Heart left ventricle (tissue), 16 donors: ENCODE measurements at regions of chr15 and their contacts with region 1.

Region 1: GRCh38 chr15:89087830-89088604 is at the start of gene ABHD2:
- DNase-seq: peak; percentile 99 to 100 (median 99)
- ATAC-seq: peak; percentile 89 to 96 (median 94)
- H3K4me3 ChIP-seq: peak within 1 kb of the TSS; percentile 75 to 97 (median 94)
- H3K27ac ChIP-seq: peak within 1 kb of the TSS; percentile 91 to 98 (median 96)
- H3K4me1 ChIP-seq: peaks cover 0 to 60% (median 49%) of the 10 kb centered on the region in 12 donors
- H3K27me3 ChIP-seq: no peaks in the 10 kb centered on the region
- CTCF ChIP-seq: no peak
- POLR2A ChIP-seq: peak; percentile 87 to 97
- total RNA-seq, gene ABHD2: 53.4 to 243 (median 128) TPM

Region 2: DNA sequence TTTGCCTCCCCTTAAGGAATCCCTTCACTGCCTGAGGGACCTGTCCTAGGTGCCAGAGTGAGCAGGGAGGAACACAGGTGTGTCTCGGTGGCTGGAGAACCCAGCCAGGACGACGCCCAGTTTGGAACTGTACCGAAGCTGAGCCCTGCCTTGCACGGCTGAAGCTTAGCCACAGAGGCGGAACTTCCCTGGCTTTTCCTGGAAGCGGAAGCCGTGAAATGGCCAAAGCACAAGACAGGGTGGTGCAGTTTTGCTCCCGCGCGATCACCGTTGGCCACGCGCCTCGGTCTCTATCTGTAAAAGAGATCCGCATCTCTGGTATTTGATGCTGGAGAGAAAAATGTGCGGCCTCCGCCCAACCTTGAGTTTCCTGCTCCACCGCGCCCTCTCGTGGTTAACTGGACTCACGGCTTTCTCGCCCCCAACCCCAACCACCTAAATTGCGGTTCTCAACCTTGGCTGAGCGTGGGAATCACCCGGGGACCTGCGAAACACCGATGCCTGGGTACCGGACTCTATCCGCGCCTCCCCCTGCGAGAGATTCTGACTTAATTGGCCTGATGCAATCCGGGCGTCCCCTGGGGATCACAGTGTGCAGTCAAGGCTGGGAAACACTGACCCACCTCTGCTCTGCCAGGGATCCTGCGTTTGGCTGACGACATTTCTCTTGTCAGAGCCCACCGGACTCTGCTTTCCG is 70.5 kb before region 1 on chr15:
- intact Hi-C with region 1: loop called in 1 of 10 experiments (anchors 10 kb)
- DNase-seq: peak; percentile 79 to 87 (median 80)
- ATAC-seq: peak; percentile 57 to 73 (median 71)
- H3K4me3 ChIP-seq: peak overlapping the region in 9 of 12 donors; percentile 37 to 49 (median 42)
- H3K27ac ChIP-seq: peak overlapping the region in 11 of 12 donors; percentile 59 to 89 (median 77)
- H3K4me1 ChIP-seq: peaks cover 5 to 50% (median 29%) of the 10 kb centered on the region in 12 donors
- H3K27me3 ChIP-seq: no peaks in the 10 kb centered on the region
- CTCF ChIP-seq: peak; percentile 72 to 91 (median 80)
- POLR2A ChIP-seq: no peak

Region 3: GRCh38 chr15:89101302-89102191 is 13.5 kb after region 1 on chr15:
- intact Hi-C with region 1: loop called in 1 of 10 experiments (anchors 2 kb)
- DNase-seq: peak; percentile 65 to 89 (median 77)
- ATAC-seq: peak; percentile 69 to 87 (median 86)
- H3K4me3 ChIP-seq: no peak overlapping the region
- H3K27ac ChIP-seq: peak overlapping the region; percentile 7 to 97 (median 88)
- H3K4me1 ChIP-seq: peaks cover 21 to 96% (median 72%) of the 10 kb centered on the region in 12 donors
- H3K27me3 ChIP-seq: no peaks in the 10 kb centered on the region
- CTCF ChIP-seq: no peak
- POLR2A ChIP-seq: peak in 1 of 2 donors; percentile 22

Region 4: GRCh38 chr15:89114997-89115396 is 27.0 kb after region 1 on chr15:
- intact Hi-C with region 1: loop called in 1 of 10 experiments (anchors 2 kb)
- DNase-seq: no peak
- ATAC-seq: no peak
- H3K4me3 ChIP-seq: no peak overlapping the region
- H3K27ac ChIP-seq: peak overlapping the region in 11 of 12 donors; percentile 8 to 97 (median 77)
- H3K4me1 ChIP-seq: peaks cover 5 to 92% (median 68%) of the 10 kb centered on the region in 12 donors
- H3K27me3 ChIP-seq: no peaks in the 10 kb centered on the region
- CTCF ChIP-seq: no peak
- POLR2A ChIP-seq: no peak

Region 5: DNA sequence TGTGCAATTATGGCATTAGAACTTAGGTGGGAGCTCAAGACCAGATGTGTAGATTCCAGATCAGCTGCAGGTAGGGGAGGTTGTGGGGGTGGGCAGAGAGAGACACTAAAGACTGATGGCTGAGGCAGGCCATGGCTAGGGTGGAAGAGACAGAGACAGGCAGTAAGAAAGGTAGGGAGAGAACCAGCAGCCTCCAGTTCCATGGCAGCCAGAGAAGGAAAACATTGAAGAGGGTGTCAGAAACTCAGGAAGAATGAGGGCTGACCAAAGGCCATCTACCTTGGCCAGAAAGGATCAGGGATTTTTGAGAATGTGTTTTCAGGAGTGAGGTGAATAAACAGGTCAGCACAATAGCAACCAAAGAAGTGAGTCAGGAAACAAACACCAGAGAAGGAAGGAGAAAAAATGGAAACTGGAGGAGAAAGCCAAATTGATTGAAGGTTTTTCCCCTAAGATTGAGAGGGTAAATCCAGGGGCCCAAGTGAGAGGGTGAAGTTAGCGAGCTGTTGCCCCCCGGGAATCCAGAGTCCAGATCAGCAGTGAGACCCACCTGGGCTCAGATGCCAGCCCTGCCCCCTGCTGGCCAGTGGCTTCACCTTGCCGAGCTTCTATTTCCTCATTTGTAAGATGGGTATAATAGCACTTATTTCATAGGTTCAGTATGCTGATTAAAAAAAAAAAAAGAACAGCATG is 41.3 kb after region 1 on chr15:
- intact Hi-C with region 1: loop called in 2 of 10 experiments (anchors 5 kb)
- DNase-seq: peak in 1 of 5 donors; percentile 66
- ATAC-seq: no peak
- H3K4me3 ChIP-seq: no peak overlapping the region
- H3K27ac ChIP-seq: peak overlapping the region in 8 of 12 donors; percentile 6 to 88 (median 44)
- H3K4me1 ChIP-seq: peaks cover 0 to 83% (median 55%) of the 10 kb centered on the region in 12 donors
- H3K27me3 ChIP-seq: no peaks in the 10 kb centered on the region
- CTCF ChIP-seq: peak; percentile 25 to 70 (median 59)
- POLR2A ChIP-seq: no peak

Region 6: GRCh38 chr15:89139400-89140166 is 51.6 kb after region 1 on chr15:
- intact Hi-C with region 1: loop called in 4 of 10 experiments (anchors 5 kb)
- DNase-seq: peak in 4 of 5 donors; percentile 41 to 65 (median 54)
- ATAC-seq: peak in 3 of 4 donors; percentile 10 to 14 (median 11)
- H3K4me3 ChIP-seq: no peak overlapping the region
- H3K27ac ChIP-seq: peak overlapping the region; percentile 31 to 90 (median 78)
- H3K4me1 ChIP-seq: peaks cover 22 to 100% (median 87%) of the 10 kb centered on the region in 12 donors
- H3K27me3 ChIP-seq: no peaks in the 10 kb centered on the region
- CTCF ChIP-seq: peak in 6 of 12 donors; percentile 11 to 42 (median 28)
- POLR2A ChIP-seq: no peak

Region 7: DNA sequence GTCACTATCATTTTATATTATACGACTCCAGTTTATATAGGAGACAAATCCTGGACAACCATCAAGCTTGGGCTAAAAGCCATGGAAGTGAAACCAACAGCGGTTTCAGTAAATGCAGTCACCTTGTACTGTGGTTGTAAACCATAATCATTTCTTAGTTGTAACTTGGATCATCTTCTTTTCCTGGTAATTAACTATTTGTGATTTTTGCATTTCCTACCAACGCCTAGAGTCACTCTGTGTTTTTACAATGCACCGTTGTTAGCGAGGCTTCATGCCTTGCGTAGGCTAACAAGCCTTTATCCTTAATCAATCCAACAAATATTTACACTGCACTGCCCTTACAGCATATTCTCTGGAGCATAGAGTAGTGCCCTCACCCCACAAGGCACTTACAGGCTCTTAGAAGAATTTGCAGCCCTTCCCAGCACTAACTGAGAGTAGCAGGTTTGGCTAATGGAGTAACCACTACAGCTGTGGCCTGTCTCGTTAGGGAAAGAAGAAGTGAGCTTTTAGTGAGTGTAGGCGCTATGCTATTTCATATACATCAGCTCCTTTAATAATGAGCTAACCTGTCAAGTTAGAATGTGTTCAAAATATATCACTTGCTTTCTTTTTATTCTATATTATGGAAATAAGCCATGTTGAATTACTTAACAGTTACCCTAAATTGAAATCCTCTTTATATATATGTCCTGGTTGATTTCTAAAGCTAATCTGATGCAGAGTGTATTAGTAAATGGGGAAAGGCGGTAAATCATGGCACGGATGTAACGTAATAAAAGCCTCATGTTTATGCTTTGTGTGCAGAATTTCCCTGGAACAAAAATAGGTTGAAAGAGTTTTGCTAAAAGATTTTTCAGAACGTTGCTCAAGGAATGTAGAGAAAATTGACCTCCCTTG is 63.0 kb after region 1 on chr15:
- intact Hi-C with region 1: no loop called
- DNase-seq: no peak
- ATAC-seq: no peak
- H3K4me3 ChIP-seq: no peak overlapping the region
- H3K27ac ChIP-seq: peak overlapping the region in 4 of 12 donors; percentile 1 to 44 (median 20)
- H3K4me1 ChIP-seq: peaks cover 0 to 54% (median 23%) of the 10 kb centered on the region in 12 donors
- H3K27me3 ChIP-seq: no peaks in the 10 kb centered on the region
- CTCF ChIP-seq: no peak
- POLR2A ChIP-seq: no peak

Region 8: GRCh38 chr15:89171136-89172072 is 83.4 kb after region 1 on chr15:
- intact Hi-C with region 1: loop called in 3 of 10 experiments (anchors 2 to 10 kb)
- DNase-seq: peak in 3 of 5 donors; percentile 41 to 43 (median 42)
- ATAC-seq: no peak
- H3K4me3 ChIP-seq: no peak overlapping the region
- H3K27ac ChIP-seq: no peak overlapping the region
- H3K4me1 ChIP-seq: peaks cover 3 to 54% (median 29%) of the 10 kb centered on the region in 12 donors
- H3K27me3 ChIP-seq: no peaks in the 10 kb centered on the region
- CTCF ChIP-seq: peak; percentile 39 to 72 (median 62)
- POLR2A ChIP-seq: no peak

Region 9: GRCh38 chr15:89430530-89431341 is 342.7 kb after region 1 on chr15:
- intact Hi-C with region 1: no loop called
- DNase-seq: peak; percentile 77 to 91 (median 82)
- ATAC-seq: peak; percentile 90 to 97 (median 92)
- H3K4me3 ChIP-seq: peak overlapping the region; percentile 24 to 62 (median 47)
- H3K27ac ChIP-seq: no peak overlapping the region
- H3K4me1 ChIP-seq: peaks cover 0 to 14% (median 5%) of the 10 kb centered on the region in 12 donors
- H3K27me3 ChIP-seq: peaks cover 0 to 15% (median 3%) of the 10 kb centered on the region in 9 donors
- CTCF ChIP-seq: peak; percentile 96 to 99 (median 97)
- POLR2A ChIP-seq: no peak